ENCODE measurements at regions of chr6 and their contacts with region 1.

Region 1: DNA sequence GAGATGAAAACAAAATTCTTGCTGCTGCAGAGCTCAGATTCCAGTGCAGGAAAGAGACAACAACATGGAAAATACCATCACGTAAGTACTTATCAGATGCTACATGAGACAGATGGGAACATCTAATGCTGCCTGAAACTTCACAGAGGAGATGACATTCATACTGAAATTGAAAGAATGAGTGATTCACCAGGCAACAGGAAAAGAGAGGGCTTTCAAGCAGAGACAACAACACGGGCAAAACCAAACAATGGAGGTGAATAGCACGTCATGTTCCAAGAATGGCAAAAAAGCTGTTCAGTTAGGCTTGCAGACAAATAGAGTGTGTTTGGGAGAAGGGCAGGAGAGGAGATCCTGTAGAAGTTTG is 39.3 kb downstream of the GTF2H5 start:
- DNase-seq: peak; percentile 57
- ATAC-seq: peak; percentile 95
- H3K4me3 Mint-ChIP-seq: peak overlapping the region; percentile 15
- H3K27ac Mint-ChIP-seq: peak overlapping the region; percentile 90
- H3K4me1 Mint-ChIP-seq: peaks cover 32% of the 10 kb centered on the region
- H3K27me3 Mint-ChIP-seq: peaks cover 5% of the 10 kb centered on the region

Region 2: DNA sequence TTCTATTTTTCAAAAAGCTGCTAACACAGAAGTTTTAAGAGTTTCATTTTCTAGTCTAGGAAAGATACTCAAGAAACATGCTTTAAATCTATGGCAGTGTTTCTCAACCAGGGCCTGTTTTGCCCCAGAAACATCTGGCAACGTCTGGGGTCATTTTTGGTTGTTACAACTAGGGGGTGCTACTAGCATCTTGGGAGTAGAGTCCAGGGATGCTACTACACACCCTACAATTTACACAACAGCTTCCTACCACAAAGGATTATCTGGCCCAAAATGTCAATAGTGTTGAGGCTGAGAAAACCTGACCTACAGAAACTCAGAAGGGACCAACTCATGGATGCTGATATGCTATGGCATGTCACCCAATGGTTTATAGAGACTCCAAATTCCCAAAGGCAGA is 63.7 kb before region 1 on chr6:
- CTCF ChIA-PET with region 1: interaction called, 3 read pairs
- POLR2A ChIA-PET with region 1: interaction called, 4 read pairs
- intact Hi-C with region 1: loop called in 1 of 2 experiments (anchors 10 kb)
- DNase-seq: peak; percentile 24
- ATAC-seq: no peak
- H3K4me3 Mint-ChIP-seq: no peak overlapping the region
- H3K27ac Mint-ChIP-seq: no peak overlapping the region
- H3K4me1 Mint-ChIP-seq: no peaks in the 10 kb centered on the region
- H3K27me3 Mint-ChIP-seq: no peaks in the 10 kb centered on the region

Region 3: DNA sequence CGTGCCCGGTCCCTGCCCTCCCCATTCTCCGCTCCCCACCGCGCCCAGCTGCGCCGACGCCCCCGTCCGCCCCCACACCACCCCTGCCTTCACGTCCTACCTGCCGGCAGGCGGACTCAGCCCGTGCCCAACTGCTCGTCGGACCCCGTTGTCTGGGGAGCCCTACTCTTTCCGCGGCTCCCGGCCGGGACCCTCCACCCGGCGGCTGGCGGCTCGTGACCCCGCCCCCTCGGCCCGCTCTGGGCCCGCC is 39.4 kb before region 1 on chr6 and contains the start of gene SERAC1:
- CTCF ChIA-PET with region 1: interaction called, 3 read pairs
- POLR2A ChIA-PET with region 1: interaction called, 6 read pairs
- intact Hi-C with region 1: loop called (anchors 1 to 2 kb)
- DNase-seq: no peak
- ATAC-seq: peak; percentile 30
- H3K4me3 Mint-ChIP-seq: peak within 1 kb of the TSS; percentile 89
- H3K27ac Mint-ChIP-seq: peak within 1 kb of the TSS; percentile 95
- H3K4me1 Mint-ChIP-seq: peaks cover 21% of the 10 kb centered on the region
- H3K27me3 Mint-ChIP-seq: no peaks in the 10 kb centered on the region
- total RNA-seq, gene SERAC1: 3.9 to 5.7 TPM

Region 4: DNA sequence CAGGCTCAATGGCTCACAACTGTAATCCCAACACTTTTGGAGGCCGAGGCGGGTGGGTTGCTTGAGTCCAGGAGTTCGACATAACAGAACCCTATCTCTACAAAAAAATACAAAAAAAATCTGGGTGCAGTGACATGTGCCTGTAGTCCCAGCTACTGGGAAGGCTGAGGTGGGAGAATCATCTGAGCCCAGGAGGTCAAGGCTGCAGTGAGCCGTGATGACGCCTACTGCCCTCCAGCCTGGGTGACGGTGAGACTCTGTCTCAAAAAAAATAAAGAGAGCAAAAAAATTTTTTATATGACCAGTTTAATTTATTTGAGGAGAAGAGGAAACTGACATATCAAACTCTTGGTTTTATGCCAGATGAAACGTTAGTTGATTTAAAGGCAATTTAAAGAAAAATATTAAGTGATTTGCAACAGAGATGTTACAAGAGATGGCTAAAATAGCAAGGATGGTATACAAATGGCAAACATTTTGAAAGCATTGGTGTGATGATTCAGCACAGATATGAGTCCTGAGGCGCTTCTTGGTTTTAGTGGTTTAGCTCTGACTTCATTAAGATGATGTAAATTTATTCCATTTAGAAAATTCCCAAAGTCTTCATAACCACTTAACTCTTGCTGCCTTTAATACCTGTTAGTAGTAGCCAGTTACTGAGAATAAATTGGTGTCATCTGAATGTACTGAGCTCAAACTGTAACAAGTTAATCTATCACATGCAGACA is 21.5 kb before region 1 on chr6:
- CTCF ChIA-PET with region 1: interaction called, 6 read pairs
- POLR2A ChIA-PET with region 1: no interaction called
- intact Hi-C with region 1: loop called in 1 of 2 experiments (anchors 1 kb)
- DNase-seq: no peak
- ATAC-seq: peak; percentile 74
- H3K4me3 Mint-ChIP-seq: no peak overlapping the region
- H3K27ac Mint-ChIP-seq: peak overlapping the region; percentile 44
- H3K4me1 Mint-ChIP-seq: peaks cover 31% of the 10 kb centered on the region
- H3K27me3 Mint-ChIP-seq: no peaks in the 10 kb centered on the region

Region 5: GRCh38 chr6:158231551-158232315 is 24.3 kb after region 1 on chr6:
- CTCF ChIA-PET with region 1: no interaction called
- POLR2A ChIA-PET with region 1: interaction called, 3 read pairs
- intact Hi-C with region 1: loop called in 1 of 2 experiments (anchors 1 kb)
- DNase-seq: peak; percentile 83
- ATAC-seq: peak; percentile 79
- H3K4me3 Mint-ChIP-seq: peak overlapping the region; percentile 86
- H3K27ac Mint-ChIP-seq: peak overlapping the region; percentile 88
- H3K4me1 Mint-ChIP-seq: peaks cover 30% of the 10 kb centered on the region
- H3K27me3 Mint-ChIP-seq: no peaks in the 10 kb centered on the region

Region 6: DNA sequence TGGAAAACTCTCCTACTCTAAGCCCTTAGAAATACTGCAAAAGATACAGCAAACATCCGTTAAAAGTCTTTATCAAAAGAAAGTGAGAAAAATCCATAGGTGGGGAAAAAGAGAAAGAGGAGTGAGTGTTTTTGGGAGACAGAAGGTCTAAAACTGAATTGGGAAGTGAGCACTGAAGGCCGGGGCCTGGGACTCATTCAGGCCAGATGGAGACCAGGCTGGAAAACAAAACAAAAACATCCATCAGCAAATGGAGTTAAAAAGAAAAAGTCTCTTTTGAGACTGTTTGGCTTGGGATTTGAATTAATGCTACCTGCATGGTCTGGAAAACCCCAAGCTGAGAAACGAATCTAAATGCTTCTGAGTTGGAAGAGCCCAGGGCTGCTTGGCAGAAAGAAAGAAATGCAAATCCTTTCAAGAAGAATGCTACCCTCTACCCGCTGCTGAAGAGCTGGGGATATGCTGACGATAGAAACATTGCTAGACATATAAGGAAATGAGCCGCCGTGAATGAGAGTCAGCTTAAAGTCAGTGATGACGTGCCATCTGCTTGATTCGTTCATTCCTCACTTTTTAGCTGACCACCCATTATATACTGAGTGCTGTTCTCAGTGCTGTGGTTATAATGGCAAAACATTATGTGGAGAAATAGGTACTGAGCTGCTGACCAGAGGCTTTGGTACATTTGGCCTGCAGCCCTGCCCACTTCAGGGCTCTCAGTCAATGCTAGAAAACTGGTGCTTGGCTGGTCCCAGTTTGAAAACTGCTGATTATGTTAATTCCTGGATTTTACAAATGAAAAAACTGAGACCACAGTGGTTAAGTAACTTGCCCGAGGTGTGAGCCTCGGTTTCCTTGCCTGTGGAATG is 76.8 kb after region 1 on chr6:
- CTCF ChIA-PET with region 1: no interaction called
- POLR2A ChIA-PET with region 1: no interaction called
- intact Hi-C with region 1: no loop called
- DNase-seq: peak; percentile 30
- ATAC-seq: peak; percentile 84
- H3K4me3 Mint-ChIP-seq: no peak overlapping the region
- H3K27ac Mint-ChIP-seq: peak overlapping the region; percentile 44
- H3K4me1 Mint-ChIP-seq: peaks cover 34% of the 10 kb centered on the region
- H3K27me3 Mint-ChIP-seq: no peaks in the 10 kb centered on the region

Region 7: GRCh38 chr6:158853072-158853871 is 645.9 kb after region 1 on chr6:
- CTCF ChIA-PET with region 1: no interaction called
- POLR2A ChIA-PET with region 1: no interaction called
- intact Hi-C with region 1: loop called in 1 of 2 experiments (anchors 2 kb)
- DNase-seq: peak; percentile 94
- ATAC-seq: peak; percentile 83
- H3K4me3 Mint-ChIP-seq: no peak overlapping the region
- H3K27ac Mint-ChIP-seq: no peak overlapping the region
- H3K4me1 Mint-ChIP-seq: peaks cover 29% of the 10 kb centered on the region
- H3K27me3 Mint-ChIP-seq: no peaks in the 10 kb centered on the region

Measured in activated CD4-positive, alpha-beta T cell treated with anti-CD3 and anti-CD28 coated beads for 36 hours (primary cell).